Activated naive CD4-positive, alpha-beta T cell treated with anti-CD3 and anti-CD28 coated beads for 36 hours (primary cell): ENCODE measurements at regions of chr14 and their contacts with region 1.

Region 1: GRCh38 chr14:92680781-92681650 is 67.4 kb downstream of the LGMN start:
- DNase-seq: peak; percentile 85
- H3K4me3 Mint-ChIP-seq: no peak overlapping the region
- H3K27ac Mint-ChIP-seq: peak overlapping the region; percentile 68
- H3K4me1 Mint-ChIP-seq: peaks cover 30% of the 10 kb centered on the region
- H3K27me3 Mint-ChIP-seq: no peaks in the 10 kb centered on the region

Region 2: GRCh38 chr14:92135267-92135666 is 545.7 kb before region 1 on chr14:
- CTCF ChIA-PET with region 1: no interaction called
- intact Hi-C with region 1: loop called (anchors 5 kb)
- DNase-seq: no peak
- H3K4me3 Mint-ChIP-seq: no peak overlapping the region
- H3K27ac Mint-ChIP-seq: no peak overlapping the region
- H3K4me1 Mint-ChIP-seq: peaks cover 2% of the 10 kb centered on the region
- H3K27me3 Mint-ChIP-seq: no peaks in the 10 kb centered on the region

Region 3: GRCh38 chr14:92323011-92323915 is 357.8 kb before region 1 on chr14 and contains the start of gene SLC24A4:
- CTCF ChIA-PET with region 1: no interaction called
- intact Hi-C with region 1: loop called (anchors 5 kb)
- DNase-seq: no peak
- H3K4me3 Mint-ChIP-seq: peak within 1 kb of the TSS; percentile 61
- H3K27ac Mint-ChIP-seq: no peak within 1 kb of the TSS
- H3K4me1 Mint-ChIP-seq: peaks cover 4% of the 10 kb centered on the region
- H3K27me3 Mint-ChIP-seq: peaks cover 53% of the 10 kb centered on the region
- total RNA-seq, gene SLC24A4: not detected

Region 4: DNA sequence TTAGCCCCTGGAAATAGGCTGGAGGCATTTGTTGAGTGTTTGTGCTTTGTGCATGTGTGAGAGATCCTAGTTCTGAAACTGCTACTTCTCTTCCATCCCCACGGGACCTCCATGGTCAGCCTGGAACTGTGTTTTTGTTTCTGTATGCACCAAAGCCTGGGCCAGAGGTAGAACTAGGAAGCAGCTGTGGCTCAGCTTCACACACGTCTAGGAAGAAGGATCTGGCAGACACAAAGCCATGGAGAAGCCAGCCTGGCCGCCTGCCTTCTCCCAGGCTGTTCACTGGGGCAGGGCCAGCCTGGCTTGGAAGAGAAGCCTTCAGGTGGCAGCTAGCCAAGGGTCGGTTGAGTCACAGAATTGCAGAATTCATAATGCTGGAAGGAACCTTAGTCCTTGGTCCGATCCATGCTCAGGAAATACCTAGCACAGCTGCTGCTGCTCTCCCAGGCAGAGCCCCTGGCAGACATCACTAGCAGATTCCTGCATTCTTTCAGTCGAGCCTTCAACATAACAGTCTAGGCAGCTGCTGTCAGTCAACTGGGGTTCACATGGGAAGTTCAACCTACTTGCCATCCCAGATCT is 140.5 kb before region 1 on chr14:
- CTCF ChIA-PET with region 1: no interaction called
- intact Hi-C with region 1: no loop called
- DNase-seq: no peak
- H3K4me3 Mint-ChIP-seq: no peak overlapping the region
- H3K27ac Mint-ChIP-seq: no peak overlapping the region
- H3K4me1 Mint-ChIP-seq: peaks cover 36% of the 10 kb centered on the region
- H3K27me3 Mint-ChIP-seq: peaks cover 3% of the 10 kb centered on the region

Region 5: DNA sequence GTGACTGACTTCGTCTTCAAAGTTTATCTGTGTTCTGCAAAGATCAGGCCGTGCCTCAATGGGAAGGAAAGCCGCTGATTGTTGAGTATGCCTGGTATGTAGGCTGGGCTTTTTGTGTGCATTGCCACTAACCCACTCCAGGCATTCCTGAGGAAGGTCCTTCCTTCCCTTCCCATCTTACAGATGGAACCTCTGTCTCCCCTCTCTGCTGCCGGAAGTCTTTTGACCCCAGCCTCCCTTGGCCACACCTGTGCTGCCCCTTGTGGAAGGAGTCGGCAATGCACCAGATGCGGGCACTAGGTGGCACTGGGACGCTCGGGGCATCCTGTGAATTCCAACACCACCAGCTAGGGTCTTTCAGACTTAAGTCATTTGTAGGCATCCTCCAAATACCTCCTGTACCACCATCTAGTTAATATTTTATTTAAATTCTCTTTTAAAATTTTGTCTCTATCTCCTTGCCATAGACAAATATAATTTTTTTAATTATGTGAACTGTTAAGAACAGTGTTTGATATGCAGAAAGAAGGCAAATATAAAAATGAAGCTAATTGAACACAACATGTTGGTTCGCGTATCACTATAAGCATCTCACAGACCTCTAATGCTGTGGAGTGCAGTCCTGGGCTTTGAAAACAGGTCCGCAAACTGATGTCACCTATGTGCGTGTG is 67.9 kb before region 1 on chr14:
- CTCF ChIA-PET with region 1: interaction called, 35 read pairs
- intact Hi-C with region 1: loop called (anchors 1 kb)
- DNase-seq: peak; percentile 87
- H3K4me3 Mint-ChIP-seq: no peak overlapping the region
- H3K27ac Mint-ChIP-seq: no peak overlapping the region
- H3K4me1 Mint-ChIP-seq: peaks cover 52% of the 10 kb centered on the region
- H3K27me3 Mint-ChIP-seq: no peaks in the 10 kb centered on the region

Region 6: GRCh38 chr14:92657457-92658142 is 23.4 kb before region 1 on chr14:
- CTCF ChIA-PET with region 1: interaction called, 12 read pairs
- intact Hi-C with region 1: no loop called
- DNase-seq: no peak
- H3K4me3 Mint-ChIP-seq: peak overlapping the region; percentile 38
- H3K27ac Mint-ChIP-seq: peak overlapping the region; percentile 69
- H3K4me1 Mint-ChIP-seq: peaks cover 81% of the 10 kb centered on the region
- H3K27me3 Mint-ChIP-seq: no peaks in the 10 kb centered on the region

Region 7: GRCh38 chr14:92668276-92668973 is 12.6 kb before region 1 on chr14:
- CTCF ChIA-PET with region 1: interaction called, 8 read pairs
- intact Hi-C with region 1: loop called (anchors 1 kb)
- DNase-seq: no peak
- H3K4me3 Mint-ChIP-seq: no peak overlapping the region
- H3K27ac Mint-ChIP-seq: peak overlapping the region; percentile 79
- H3K4me1 Mint-ChIP-seq: peaks cover 77% of the 10 kb centered on the region
- H3K27me3 Mint-ChIP-seq: no peaks in the 10 kb centered on the region

Region 8: GRCh38 chr14:92737206-92737605 is 56.2 kb after region 1 on chr14:
- CTCF ChIA-PET with region 1: no interaction called
- intact Hi-C with region 1: no loop called
- DNase-seq: no peak
- H3K4me3 Mint-ChIP-seq: no peak overlapping the region
- H3K27ac Mint-ChIP-seq: no peak overlapping the region
- H3K4me1 Mint-ChIP-seq: peaks cover 11% of the 10 kb centered on the region
- H3K27me3 Mint-ChIP-seq: no peaks in the 10 kb centered on the region